ENCODE measurements at regions of chr16 and their contacts with region 1.

Region 1: GRCh38 chr16:75764154-75764768 is 38.0 kb upstream of the CPHXL start:
- DNase-seq: no peak

Region 2: DNA sequence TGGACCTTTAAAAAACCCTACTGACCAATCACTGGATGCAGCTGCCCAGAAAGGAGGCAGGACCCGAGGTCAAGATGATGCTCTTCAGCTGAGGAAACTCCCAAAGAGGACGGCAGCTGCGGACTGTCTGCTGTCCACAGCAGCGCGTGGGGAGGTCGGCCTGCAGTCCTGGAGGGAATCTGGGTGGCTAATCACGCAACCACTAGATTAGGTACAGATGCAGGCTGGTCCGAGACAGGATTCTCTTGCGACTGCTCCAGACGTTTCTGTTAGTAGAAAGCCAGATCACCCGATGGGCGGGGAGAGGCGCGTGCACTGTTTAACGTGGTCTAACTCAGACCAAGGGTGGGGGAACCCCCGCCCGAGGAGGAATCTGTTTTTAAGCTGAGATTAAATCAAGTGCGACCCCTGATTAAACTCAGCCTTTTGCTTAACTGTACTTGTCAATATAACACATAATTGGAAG is 566.1 kb before region 1 on chr16:
- intact Hi-C with region 1: loop called (anchors 10 kb)
- DNase-seq: peak; percentile 68

Region 3: DNA sequence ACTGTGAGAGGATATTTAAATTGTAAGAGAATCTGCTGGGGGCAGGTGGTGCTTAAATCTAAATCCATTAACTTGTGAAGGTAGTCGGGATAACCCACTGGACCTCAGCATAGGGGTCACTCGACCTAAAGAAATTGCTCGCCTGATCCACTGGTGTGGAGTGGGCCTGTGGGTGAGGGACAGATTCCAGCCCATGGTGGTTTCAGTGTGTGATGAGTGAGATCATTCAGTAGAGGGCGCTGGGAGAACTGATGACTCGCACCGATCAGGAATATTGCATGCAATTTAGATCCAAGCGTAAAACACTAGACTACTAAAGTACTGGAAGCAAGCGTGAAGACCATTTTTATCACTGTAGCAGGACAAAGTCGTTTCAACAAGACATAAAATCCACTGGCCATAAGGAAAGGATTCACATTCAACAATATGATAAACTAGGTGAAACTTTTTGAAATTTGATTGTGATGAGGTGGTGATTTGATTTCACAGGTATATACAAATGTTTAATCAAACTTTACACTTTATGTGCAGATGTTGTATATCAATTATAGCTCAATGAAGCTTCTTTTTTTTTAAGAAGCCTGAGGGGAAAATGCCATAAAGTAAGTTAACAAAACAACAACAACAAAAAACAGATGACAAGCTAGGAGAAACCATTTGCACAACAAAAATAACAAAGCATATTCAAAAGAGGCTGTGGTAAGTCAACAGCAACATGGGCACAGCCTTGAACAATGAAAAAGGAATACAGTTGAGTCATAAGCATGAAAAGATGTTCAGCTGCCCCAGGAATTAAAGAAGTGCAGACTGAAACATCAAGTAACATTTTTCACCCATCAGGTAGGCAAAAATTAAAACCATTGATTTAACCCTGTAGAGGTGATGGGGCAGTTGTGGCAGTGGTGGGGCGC is 292.3 kb before region 1 on chr16:
- intact Hi-C with region 1: loop called (anchors 5 kb)
- DNase-seq: no peak

Region 4: DNA sequence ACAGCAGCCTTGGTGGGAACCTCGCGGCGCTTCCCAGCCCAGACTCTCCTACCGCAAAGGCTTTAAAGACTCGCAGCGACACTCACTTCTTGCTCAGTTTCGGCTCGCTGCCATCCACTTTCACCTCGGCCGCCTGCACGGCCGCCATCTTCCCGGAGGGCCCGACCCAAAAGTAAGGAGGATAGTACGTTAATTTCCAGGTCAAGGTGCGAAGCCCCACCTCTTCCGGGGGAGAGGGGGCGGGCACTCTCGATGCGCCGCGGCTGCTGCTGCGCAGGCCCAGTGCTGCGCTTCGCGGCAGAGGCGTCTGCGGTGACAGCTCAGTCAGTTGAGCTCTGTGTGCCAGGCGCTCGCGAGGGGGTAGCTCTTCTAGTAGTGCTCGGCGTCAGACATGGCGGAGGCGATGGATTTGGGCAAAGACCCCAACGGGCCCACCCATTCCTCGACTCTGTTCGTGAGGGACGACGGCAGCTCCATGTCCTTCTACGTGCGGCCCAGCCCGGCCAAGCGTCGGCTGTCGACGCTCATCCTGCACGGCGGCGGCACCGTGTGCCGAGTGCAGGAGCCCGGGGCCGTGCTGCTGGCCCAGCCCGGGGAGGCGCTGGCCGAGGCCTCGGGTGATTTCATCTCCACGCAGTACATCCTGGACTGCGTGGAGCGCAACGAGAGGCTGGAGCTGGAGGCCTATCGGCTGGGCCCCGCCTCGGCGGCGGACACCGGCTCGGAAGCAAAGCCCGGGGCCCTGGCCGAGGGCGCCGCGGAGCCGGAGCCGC is 116.6 kb before region 1 on chr16 and contains the starts of genes KARS1 and TERF2IP:
- intact Hi-C with region 1: loop called (anchors 5 kb)
- DNase-seq: peak; percentile 98
- total RNA-seq, gene KARS1: 89.3 TPM
- total RNA-seq, gene TERF2IP: 76.0 TPM

Region 5: GRCh38 chr16:75836347-75837010 is 72.2 kb after region 1 on chr16:
- intact Hi-C with region 1: no loop called
- DNase-seq: no peak

Measured in cardiac septum (tissue), 1 donor.